ENCODE measurements at regions of chr3 and their contacts with region 1.

Region 1: DNA sequence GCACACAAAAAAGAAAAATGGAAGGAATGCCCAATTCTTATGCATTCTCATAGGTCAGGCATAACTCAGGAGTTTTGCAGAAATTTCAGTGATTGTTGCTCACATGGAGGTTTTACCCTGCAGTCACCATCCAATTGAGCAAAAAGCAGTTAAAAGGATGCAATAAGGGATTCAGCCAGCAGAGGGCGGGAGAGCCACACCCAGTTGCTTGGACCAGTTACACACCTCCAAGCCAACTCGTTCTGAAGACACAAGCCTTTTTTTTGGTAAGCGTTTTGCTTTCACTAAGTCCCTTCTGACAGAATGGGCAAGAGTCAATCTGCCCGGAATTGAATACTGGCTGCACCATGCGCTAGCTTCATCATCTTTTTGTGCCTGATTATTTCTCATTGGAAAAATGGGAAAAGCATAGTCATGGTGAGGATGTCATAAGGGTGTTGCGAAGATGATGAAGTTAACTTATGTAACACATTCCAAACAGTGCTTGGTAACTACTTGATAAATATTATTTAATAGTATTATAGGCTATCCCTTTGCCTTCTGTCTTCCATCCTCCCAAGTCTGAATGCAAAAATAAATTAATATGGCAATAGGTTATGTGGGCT is 154.4 kb upstream of the SGO1 start:
- DNase-seq: peak; percentile 70 to 88 (median 77)
- ATAC-seq: peak; percentile 91
- H3K4me3 ChIP-seq: no peak overlapping the region
- H3K27ac ChIP-seq: no peak overlapping the region
- H3K4me1 ChIP-seq: peaks cover 0 to 9% of the 10 kb centered on the region in 2 experiments; a peak in 1 of 5 replicates
- H3K27me3 ChIP-seq: no peaks in the 10 kb centered on the region
- CTCF ChIP-seq: peak; percentile 83 to 97 (median 95)
- EP300 ChIP-seq: 0 out of 2 replicates have a peak, but pooled peaks have one; percentile 10
- POLR2A ChIP-seq: no peak
- RAD21 ChIP-seq: peak; percentile 92 to 95

Region 2: GRCh38 chr3:20225769-20226168 is 114.7 kb before region 1 on chr3:
- CTCF ChIA-PET with region 1: interaction called, 3 read pairs
- POLR2A ChIA-PET with region 1: no interaction called
- in situ Hi-C with region 1: no loop called
- intact Hi-C with region 1: loop called (anchors 2 kb)
- DNase-seq: peak in 3 of 4 experiments; percentile 17 to 70 (median 37)
- ATAC-seq: peak; percentile 97
- H3K4me3 ChIP-seq: no peak overlapping the region
- H3K27ac ChIP-seq: no peak overlapping the region
- H3K4me1 ChIP-seq: no peaks in the 10 kb centered on the region
- H3K27me3 ChIP-seq: no peaks in the 10 kb centered on the region
- CTCF ChIP-seq: peak; percentile 81 to 96 (median 85)
- EP300 ChIP-seq: no peak
- POLR2A ChIP-seq: no peak
- RAD21 ChIP-seq: peak; percentile 88 to 95

Region 3: GRCh38 chr3:20511863-20512505 is 171.6 kb after region 1 on chr3:
- CTCF ChIA-PET with region 1: no interaction called
- POLR2A ChIA-PET with region 1: no interaction called
- in situ Hi-C with region 1: no loop called
- intact Hi-C with region 1: loop called (anchors 2 kb)
- DNase-seq: peak in 3 of 4 experiments; percentile 16 to 60 (median 31)
- ATAC-seq: peak; percentile 90
- H3K4me3 ChIP-seq: no peak overlapping the region
- H3K27ac ChIP-seq: no peak overlapping the region
- H3K4me1 ChIP-seq: no peaks in the 10 kb centered on the region
- H3K27me3 ChIP-seq: no peaks in the 10 kb centered on the region
- CTCF ChIP-seq: peak; percentile 44 to 69 (median 59); a peak in 4 of 6 replicates
- EP300 ChIP-seq: no peak
- POLR2A ChIP-seq: no peak
- RAD21 ChIP-seq: peak; percentile 86 to 87

Region 4: DNA sequence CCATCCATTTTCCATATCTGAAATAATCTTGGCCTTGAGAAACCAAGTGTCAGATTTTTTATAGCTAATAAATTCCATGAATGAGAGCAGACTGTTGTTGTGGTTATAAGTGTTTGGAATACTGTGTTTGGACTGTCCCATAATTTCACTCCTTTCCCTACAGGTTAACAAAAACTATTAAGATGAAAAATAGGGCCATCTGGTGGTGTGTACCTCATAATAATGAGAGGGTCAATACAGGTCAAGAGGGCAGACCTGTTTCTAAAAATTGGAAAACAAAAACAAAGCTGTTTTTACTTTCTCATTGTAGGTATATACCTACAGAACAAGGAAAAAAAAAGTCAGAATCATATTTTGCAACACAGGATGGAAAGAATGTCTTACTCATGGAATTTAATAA is 399.4 kb after region 1 on chr3:
- CTCF ChIA-PET with region 1: no interaction called
- POLR2A ChIA-PET with region 1: no interaction called
- in situ Hi-C with region 1: no loop called
- intact Hi-C with region 1: loop called (anchors 10 kb)
- DNase-seq: peak in 1 of 4 experiments; percentile 5
- ATAC-seq: no peak
- H3K4me3 ChIP-seq: no peak overlapping the region
- H3K27ac ChIP-seq: no peak overlapping the region
- H3K4me1 ChIP-seq: no peaks in the 10 kb centered on the region
- H3K27me3 ChIP-seq: no peaks in the 10 kb centered on the region
- CTCF ChIP-seq: no peak
- EP300 ChIP-seq: no peak
- POLR2A ChIP-seq: no peak
- RAD21 ChIP-seq: peak in 1 of 2 experiments; percentile 36; a peak in 1 of 4 replicates

Region 5: DNA sequence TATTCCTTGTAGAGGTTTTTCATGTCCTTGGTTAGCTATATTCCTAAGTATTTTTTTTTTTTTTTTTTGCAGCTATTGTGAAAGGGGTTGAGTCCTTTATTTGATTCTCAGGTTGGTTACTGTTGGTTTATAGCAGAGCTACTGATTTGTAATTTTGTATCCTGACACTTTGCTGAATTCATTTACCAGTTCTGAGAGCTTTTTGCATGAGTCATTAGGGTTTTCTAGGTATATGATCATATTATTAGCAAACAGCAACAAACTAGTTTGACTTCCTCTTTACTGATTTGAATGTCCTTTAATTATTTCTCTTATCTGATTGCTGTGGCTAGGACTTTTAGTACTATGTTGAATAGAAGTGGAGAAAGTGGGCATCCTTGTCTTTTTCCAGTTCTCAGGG is 673.1 kb after region 1 on chr3:
- CTCF ChIA-PET with region 1: no interaction called
- POLR2A ChIA-PET with region 1: no interaction called
- in situ Hi-C with region 1: no loop called
- intact Hi-C with region 1: loop called (anchors 5 kb)
- DNase-seq: no peak
- ATAC-seq: no peak
- H3K4me3 ChIP-seq: no peak overlapping the region
- H3K27ac ChIP-seq: no peak overlapping the region
- H3K4me1 ChIP-seq: no peaks in the 10 kb centered on the region
- H3K27me3 ChIP-seq: no peaks in the 10 kb centered on the region
- CTCF ChIP-seq: no peak
- EP300 ChIP-seq: no peak
- POLR2A ChIP-seq: no peak
- RAD21 ChIP-seq: no peak

Region 6: DNA sequence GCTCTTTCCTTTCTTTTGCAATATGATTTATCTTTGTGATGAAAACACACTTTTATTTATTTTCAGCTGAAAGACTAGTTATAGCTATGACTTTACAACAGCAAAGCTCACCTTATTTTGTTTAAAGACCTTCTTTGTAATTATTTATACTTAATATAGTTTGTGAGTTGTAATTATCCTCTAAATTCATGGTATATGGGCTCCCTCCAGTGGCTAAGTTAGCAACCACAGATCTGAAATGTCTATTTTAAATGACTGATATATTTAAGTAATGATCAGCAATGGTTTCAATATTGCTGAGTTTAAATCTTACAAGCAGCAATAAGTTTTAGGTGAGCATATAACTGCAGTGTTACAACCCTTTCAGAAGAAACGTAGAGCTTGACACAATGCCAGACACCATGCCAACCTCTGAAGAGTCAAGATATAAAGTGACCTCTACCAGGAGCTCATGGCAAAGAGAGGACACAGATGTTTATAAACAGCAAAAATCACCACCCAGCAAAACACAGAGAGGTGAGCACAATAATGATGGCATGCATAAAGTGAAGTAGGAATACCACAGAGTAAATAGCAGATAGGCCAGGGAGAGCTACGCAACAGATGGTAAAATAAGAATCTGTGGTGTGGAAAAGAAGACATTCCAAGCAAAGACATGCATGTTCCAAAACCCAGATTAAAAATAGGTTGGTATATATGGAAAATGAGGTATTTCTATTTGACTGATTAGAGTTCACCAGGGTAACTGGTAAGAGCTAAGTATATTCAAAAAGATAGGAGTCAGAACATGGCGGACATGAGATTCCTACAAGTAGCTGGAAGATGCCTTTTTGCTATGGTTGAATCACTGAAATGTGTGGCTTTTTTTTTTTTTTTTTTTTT is 1554.3 kb after region 1 on chr3:
- CTCF ChIA-PET with region 1: no interaction called
- POLR2A ChIA-PET with region 1: no interaction called
- in situ Hi-C with region 1: no loop called
- intact Hi-C with region 1: loop called (anchors 10 kb)
- DNase-seq: peak in 1 of 4 experiments; percentile 1
- ATAC-seq: no peak
- H3K4me3 ChIP-seq: no peak overlapping the region
- H3K27ac ChIP-seq: no peak overlapping the region
- H3K4me1 ChIP-seq: no peaks in the 10 kb centered on the region
- H3K27me3 ChIP-seq: no peaks in the 10 kb centered on the region
- CTCF ChIP-seq: peak in 1 of 3 experiments; percentile 35; a peak in 2 of 6 replicates
- EP300 ChIP-seq: no peak
- POLR2A ChIP-seq: no peak
- RAD21 ChIP-seq: peak; percentile 39 to 52